BJ (cell line): ENCODE measurements at regions of chr22 and their contacts with region 1.

Region 1: DNA sequence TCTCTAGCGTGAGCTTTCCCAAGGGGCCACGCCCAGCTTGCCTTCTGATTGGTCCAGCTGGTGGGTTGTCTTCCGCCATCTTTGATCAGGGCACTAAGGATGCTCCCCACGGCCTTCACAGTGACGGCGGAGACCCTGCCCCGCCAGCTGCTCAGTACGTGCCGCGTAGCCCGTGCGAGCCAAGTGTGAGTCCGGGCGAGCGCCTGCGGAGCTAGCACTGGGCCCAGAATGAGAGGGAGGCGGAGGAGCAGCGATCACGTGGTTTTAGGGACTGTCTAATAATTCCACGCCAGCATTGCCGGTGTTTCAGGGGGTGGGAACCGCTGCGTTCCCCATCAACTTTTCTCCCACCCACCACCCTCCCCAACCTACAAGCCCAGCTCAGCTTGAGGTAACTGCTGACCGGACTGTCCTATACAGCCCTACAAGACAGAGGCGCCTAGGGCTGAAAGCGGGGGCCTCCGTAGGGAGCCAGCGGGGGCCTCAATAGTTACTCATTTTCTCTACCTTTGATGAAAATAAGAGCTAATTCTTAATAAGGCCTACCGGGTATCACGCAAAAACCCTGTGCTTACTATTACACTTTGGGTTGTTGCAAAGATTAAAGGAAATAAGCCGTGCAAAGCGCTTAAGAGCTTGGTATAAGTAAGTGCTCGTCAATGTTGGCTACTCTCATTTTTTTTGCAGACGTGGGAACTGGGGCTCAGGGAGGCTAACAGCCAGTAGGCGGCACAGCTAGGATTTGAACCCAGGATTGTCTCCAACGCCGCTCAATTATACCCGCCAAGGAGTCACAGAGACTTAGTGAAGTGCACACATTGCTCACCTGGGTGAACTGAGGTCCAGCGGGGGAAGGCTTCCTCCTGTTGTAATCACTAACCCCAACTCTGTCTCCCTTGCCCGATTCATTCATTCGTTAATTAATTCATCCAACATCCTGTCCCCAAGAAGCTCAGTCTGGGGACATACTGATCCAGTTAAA is 1.3 kb upstream of the MTFP1 start:
- DNase-seq: peak; percentile 96
- H3K4me3 ChIP-seq: peak overlapping the region; percentile 47
- H3K27me3 ChIP-seq: no peaks in the 10 kb centered on the region
- CTCF ChIP-seq: peak; percentile 32

Region 2: DNA sequence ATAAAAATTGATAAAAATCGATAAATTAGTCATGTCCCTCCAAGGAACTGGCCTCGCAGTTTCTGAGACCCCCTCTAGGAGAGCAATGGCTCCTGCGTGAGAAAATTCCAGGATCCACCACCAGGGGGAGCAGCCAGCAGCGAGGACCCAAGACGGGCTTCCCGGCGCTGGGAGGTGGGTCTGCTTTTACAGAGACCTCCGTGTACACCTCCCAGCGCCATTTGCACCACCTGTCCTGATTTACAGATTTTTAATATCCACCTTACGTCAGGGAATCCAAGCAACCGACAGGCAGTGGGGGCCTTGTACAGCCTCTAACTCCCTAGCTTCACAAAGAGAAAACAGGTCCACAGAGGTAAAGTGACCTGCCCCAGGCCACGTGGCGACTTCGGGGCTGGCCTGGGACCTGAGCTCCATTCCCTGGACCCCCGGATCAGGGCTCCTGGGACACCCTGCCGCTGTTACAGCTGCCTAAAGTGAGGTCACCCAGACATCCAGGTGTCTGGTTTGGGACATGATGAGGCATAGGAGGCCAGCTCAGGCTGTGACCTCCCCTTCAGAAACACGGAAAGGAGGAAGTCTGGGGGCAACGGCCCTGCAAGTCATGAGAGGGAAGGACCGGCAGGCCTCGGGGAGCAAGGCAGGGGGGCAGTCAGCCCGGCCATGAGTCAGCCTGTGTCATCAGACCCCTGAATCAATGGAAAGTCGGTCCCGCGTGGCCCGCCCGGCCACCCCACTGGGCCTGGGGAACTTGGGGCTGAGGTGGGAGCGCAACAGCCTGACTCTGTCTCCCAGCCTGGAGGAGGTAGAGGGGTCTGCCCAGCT is 161.1 kb before region 1 on chr22:
- CTCF ChIA-PET with region 1: interaction called, 11 read pairs
- POLR2A ChIA-PET with region 1: no interaction called
- DNase-seq: no peak
- H3K4me3 ChIP-seq: no peak overlapping the region
- H3K27me3 ChIP-seq: no peaks in the 10 kb centered on the region; the same call in 1 of the 2 replicates
- CTCF ChIP-seq: peak; percentile 95

Region 3: DNA sequence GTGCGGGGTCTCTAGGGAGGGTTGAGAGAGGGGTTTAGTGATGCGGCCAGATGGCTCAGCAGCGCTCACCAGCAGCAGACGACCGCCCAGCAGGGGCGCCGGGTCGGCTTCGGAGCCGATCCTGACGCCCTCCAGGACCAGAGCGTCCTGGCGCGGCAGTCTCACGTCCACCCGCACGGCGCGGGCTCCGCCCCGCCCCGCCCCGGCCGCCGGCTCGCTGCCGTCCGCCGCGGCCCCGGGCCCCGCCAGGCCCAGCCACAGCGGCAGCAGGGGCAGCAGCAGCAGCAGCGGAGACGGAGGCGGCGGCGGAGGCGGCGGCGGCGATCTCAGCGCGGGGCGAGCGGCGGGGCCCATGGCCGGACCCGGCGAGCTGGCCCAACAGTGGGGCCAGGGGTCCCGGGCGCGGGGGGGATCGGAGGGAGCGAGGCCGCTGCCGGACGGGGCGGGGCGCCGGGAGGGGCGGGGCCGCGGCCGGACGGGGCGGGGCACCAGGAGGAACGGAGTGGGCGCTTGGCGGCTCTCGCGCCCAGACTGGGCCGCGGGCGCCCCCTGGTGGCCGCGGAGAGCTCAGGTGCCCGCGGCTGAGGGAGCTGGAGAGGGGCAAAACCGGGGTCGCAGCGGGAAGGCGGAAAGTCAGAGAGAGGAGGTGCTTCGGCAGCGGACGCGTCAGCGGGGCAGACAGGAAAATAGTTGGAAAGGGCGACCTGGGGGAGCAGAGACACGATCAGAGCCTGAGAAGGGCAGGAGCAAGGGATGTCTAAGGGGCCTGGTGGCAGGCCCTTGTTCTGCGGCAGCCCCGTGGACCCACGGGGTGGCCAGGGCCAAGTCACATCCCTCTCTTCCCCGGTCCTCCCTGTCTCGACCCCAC is 37.1 kb before region 1 on chr22 and contains the start of gene RNF215:
- CTCF ChIA-PET with region 1: interaction called, 29 read pairs
- POLR2A ChIA-PET with region 1: no interaction called
- DNase-seq: no peak
- H3K4me3 ChIP-seq: peak within 1 kb of the TSS; percentile 76
- H3K27me3 ChIP-seq: no peaks in the 10 kb centered on the region
- CTCF ChIP-seq: peak; percentile 82
- polyA plus RNA-seq, gene RNF215: 11.1 and 15.8 TPM in 2 replicates

Region 4: GRCh38 chr22:30396871-30397655 is 27.2 kb before region 1 on chr22 and contains the start of gene SEC14L2:
- CTCF ChIA-PET with region 1: interaction called, 29 read pairs
- POLR2A ChIA-PET with region 1: interaction called, 4 read pairs
- DNase-seq: no peak
- H3K4me3 ChIP-seq: peak within 1 kb of the TSS; percentile 77
- H3K27me3 ChIP-seq: no peaks in the 10 kb centered on the region
- CTCF ChIP-seq: no peak
- polyA plus RNA-seq, gene SEC14L2: 20.1 and 22.8 TPM in 2 replicates

Region 5: DNA sequence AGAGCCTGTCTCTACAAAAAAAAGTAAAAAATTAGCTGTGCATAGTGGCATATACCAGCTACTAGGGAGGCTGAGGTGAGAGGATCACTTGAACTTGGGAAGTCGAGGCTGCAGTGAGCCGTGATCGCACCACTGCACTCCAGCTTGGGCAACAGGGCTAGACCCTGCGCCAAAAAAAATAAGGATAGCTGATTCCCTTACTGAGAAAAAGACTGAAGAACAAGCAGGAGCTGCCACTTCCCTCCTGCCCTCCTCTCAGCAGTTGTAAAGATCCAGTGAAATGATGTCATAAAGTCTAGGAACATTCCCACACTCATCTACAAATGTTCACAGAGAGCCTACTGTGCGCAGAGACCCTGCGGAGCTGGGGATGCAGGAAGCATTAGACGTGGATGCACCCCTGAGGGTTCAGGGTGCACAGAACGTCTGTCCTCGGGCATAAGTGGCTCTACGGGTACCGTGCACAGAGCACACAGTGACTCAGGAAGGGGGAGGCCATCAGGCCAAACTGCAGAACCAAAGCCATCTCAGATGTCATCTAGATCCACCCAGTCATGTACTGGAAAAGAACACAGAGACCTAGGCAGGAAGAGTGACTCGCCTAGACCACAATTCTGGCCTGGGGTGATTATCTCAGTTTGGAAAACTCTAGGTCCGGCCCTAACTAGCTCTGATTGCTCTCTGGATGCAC is 15.7 kb before region 1 on chr22:
- CTCF ChIA-PET with region 1: interaction called, 24 read pairs
- POLR2A ChIA-PET with region 1: interaction called, 13 read pairs
- DNase-seq: peak; percentile 62
- H3K4me3 ChIP-seq: no peak overlapping the region
- H3K27me3 ChIP-seq: no peaks in the 10 kb centered on the region
- CTCF ChIP-seq: no peak

Region 6: GRCh38 chr22:30435674-30436126 is 11.4 kb after region 1 on chr22:
- CTCF ChIA-PET with region 1: interaction called, 16 read pairs
- POLR2A ChIA-PET with region 1: interaction called, 5 read pairs
- DNase-seq: no peak
- H3K4me3 ChIP-seq: no peak overlapping the region
- H3K27me3 ChIP-seq: no peaks in the 10 kb centered on the region
- CTCF ChIP-seq: no peak

Region 7: GRCh38 chr22:30444632-30445437 is 20.6 kb after region 1 on chr22:
- CTCF ChIA-PET with region 1: interaction called, 15 read pairs
- POLR2A ChIA-PET with region 1: no interaction called
- DNase-seq: no peak
- H3K4me3 ChIP-seq: no peak overlapping the region
- H3K27me3 ChIP-seq: 0 out of 2 replicates have a peak, but pooled peaks cover 4% of the 10 kb centered on the region
- CTCF ChIP-seq: peak; percentile 73

Region 8: GRCh38 chr22:30506507-30506968 is 82.3 kb after region 1 on chr22:
- CTCF ChIA-PET with region 1: no interaction called
- POLR2A ChIA-PET with region 1: no interaction called
- DNase-seq: no peak
- H3K4me3 ChIP-seq: no peak overlapping the region
- H3K27me3 ChIP-seq: peaks cover 10% of the 10 kb centered on the region
- CTCF ChIP-seq: no peak